ENCODE measurements at regions of chr17 and their contacts with region 1.

Region 1: GRCh38 chr17:35540589-35541404 is 3.3 kb upstream of the SLFN12L start:
- DNase-seq: peak in 1 of 2 donors; percentile 74
- ATAC-seq: peak; percentile 42 to 61 (median 54)
- H3K4me3 ChIP-seq: peak overlapping the region; percentile 39
- H3K4me3 Mint-ChIP-seq: peak overlapping the region; percentile 90
- H3K27ac ChIP-seq: peak overlapping the region; percentile 88
- H3K27ac Mint-ChIP-seq: peak overlapping the region; percentile 84 to 88
- H3K4me1 ChIP-seq: peaks cover 26% of the 10 kb centered on the region
- H3K4me1 Mint-ChIP-seq: peaks cover 46 to 53% of the 10 kb centered on the region in 2 donors
- H3K27me3 ChIP-seq: no peaks in the 10 kb centered on the region
- H3K27me3 Mint-ChIP-seq: no peaks in the 10 kb centered on the region
- CTCF ChIP-seq: no peak

Region 2: GRCh38 chr17:35170968-35171771 is 369.6 kb before region 1 on chr17:
- intact Hi-C with region 1: loop called (anchors 1 kb)
- DNase-seq: peak; percentile 20 to 71
- ATAC-seq: peak; percentile 69 to 87 (median 83)
- H3K4me3 ChIP-seq: no peak overlapping the region
- H3K4me3 Mint-ChIP-seq: peak overlapping the region; percentile 4
- H3K27ac ChIP-seq: no peak overlapping the region
- H3K27ac Mint-ChIP-seq: peak overlapping the region in 1 of 2 donors; percentile 72
- H3K4me1 ChIP-seq: peaks cover 12% of the 10 kb centered on the region
- H3K4me1 Mint-ChIP-seq: peaks cover 10 to 32% of the 10 kb centered on the region in 2 donors
- H3K27me3 ChIP-seq: no peaks in the 10 kb centered on the region
- H3K27me3 Mint-ChIP-seq: no peaks in the 10 kb centered on the region
- CTCF ChIP-seq: peak; percentile 66

Region 3: DNA sequence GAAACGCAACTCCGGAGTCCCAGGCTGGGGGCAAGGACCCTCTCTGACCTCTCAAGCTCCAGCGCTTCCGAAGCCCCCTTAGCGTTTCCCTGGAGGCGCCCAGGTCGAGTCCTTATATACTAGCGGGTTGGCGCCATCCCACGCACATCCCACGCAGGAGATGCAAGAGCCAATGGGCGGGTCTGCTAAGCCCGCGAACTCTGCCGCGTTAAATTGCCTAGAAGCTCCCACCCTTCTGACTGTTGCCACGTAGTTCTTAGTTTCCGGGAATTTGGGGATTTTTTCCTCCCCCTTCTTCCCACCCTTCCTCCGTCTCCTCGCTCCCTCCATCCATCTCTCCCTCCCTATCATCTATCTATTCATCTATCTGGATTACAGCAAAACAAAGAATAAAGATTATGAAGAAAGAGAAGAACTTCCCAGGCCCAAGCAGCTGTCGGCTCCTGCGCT is 167.2 kb before region 1 on chr17 and contains the start of gene SLFN11:
- intact Hi-C with region 1: loop called (anchors 1 kb)
- DNase-seq: peak; percentile 62 to 93
- ATAC-seq: peak; percentile 78 to 86 (median 83)
- H3K4me3 ChIP-seq: peak within 1 kb of the TSS; percentile 67
- H3K4me3 Mint-ChIP-seq: peak within 1 kb of the TSS; percentile 98
- H3K27ac ChIP-seq: peak within 1 kb of the TSS; percentile 88
- H3K27ac Mint-ChIP-seq: peak within 1 kb of the TSS; percentile 95 to 97
- H3K4me1 ChIP-seq: peaks cover 10% of the 10 kb centered on the region
- H3K4me1 Mint-ChIP-seq: peaks cover 23 to 37% of the 10 kb centered on the region in 2 donors
- H3K27me3 ChIP-seq: no peaks in the 10 kb centered on the region
- H3K27me3 Mint-ChIP-seq: no peaks in the 10 kb centered on the region
- CTCF ChIP-seq: no peak
- total RNA-seq, gene SLFN11: 22.9 to 31.8 (median 26.8) TPM

Region 4: DNA sequence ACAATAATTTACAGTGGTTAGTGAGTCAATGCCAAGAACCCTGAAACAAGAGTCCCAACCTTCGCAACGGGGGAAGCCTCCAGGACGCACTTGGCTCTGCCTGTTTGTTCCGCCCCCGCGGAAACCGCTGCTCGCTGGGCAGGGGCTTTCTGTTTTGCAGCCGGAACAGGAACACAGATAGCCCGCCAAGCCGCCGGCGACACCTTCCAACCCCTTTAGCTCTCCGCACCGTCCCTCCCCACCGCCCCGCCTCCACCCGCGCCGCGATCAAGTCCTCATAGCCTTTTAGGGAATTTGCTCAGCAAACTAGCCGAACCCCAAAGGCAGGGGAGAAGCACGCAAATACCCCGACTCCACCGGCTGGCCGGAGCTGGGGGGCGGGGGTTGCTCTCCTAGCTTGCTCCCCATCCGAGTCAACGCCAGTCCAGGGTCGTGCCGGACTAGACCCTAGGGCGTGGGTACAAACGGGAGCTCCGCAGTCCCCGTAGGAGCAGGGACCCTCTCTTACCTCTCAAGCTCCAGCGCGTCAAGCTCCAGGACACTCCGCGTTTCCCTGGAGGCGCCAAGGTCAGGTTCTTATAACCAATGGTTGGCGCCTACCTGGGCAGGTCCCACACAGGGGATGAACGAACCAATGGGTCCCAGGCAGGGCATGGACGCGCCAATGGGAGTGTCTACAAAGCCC is 92.4 kb before region 1 on chr17 and contains the start of gene SLFN13:
- intact Hi-C with region 1: loop called (anchors 2 kb)
- DNase-seq: peak; percentile 80 to 91
- ATAC-seq: peak; percentile 79 to 91 (median 86)
- H3K4me3 ChIP-seq: peak within 1 kb of the TSS; percentile 91
- H3K4me3 Mint-ChIP-seq: peak within 1 kb of the TSS; percentile 98
- H3K27ac ChIP-seq: peak within 1 kb of the TSS; percentile 97
- H3K27ac Mint-ChIP-seq: peak within 1 kb of the TSS; percentile 96 to 98
- H3K4me1 ChIP-seq: peaks cover 28% of the 10 kb centered on the region
- H3K4me1 Mint-ChIP-seq: peaks cover 44 to 46% of the 10 kb centered on the region in 2 donors
- H3K27me3 ChIP-seq: no peaks in the 10 kb centered on the region
- H3K27me3 Mint-ChIP-seq: no peaks in the 10 kb centered on the region
- CTCF ChIP-seq: no peak
- total RNA-seq, gene SLFN13: 85.9 to 182 (median 129) TPM

Region 5: GRCh38 chr17:35521150-35521549 is 19.6 kb before region 1 on chr17:
- intact Hi-C with region 1: loop called (anchors 1 kb)
- DNase-seq: no peak
- ATAC-seq: peak; percentile 30 to 56 (median 49)
- H3K4me3 ChIP-seq: peak overlapping the region; percentile 11
- H3K4me3 Mint-ChIP-seq: peak overlapping the region; percentile 70
- H3K27ac ChIP-seq: peak overlapping the region; percentile 74
- H3K27ac Mint-ChIP-seq: peak overlapping the region; percentile 88 to 95
- H3K4me1 ChIP-seq: peaks cover 54% of the 10 kb centered on the region
- H3K4me1 Mint-ChIP-seq: peaks cover 97 to 99% of the 10 kb centered on the region in 2 donors
- H3K27me3 ChIP-seq: no peaks in the 10 kb centered on the region
- H3K27me3 Mint-ChIP-seq: no peaks in the 10 kb centered on the region
- CTCF ChIP-seq: no peak